CD14-positive monocyte (primary cell): ENCODE measurements at regions of chr22 and their contacts with region 1.

Region 1: DNA sequence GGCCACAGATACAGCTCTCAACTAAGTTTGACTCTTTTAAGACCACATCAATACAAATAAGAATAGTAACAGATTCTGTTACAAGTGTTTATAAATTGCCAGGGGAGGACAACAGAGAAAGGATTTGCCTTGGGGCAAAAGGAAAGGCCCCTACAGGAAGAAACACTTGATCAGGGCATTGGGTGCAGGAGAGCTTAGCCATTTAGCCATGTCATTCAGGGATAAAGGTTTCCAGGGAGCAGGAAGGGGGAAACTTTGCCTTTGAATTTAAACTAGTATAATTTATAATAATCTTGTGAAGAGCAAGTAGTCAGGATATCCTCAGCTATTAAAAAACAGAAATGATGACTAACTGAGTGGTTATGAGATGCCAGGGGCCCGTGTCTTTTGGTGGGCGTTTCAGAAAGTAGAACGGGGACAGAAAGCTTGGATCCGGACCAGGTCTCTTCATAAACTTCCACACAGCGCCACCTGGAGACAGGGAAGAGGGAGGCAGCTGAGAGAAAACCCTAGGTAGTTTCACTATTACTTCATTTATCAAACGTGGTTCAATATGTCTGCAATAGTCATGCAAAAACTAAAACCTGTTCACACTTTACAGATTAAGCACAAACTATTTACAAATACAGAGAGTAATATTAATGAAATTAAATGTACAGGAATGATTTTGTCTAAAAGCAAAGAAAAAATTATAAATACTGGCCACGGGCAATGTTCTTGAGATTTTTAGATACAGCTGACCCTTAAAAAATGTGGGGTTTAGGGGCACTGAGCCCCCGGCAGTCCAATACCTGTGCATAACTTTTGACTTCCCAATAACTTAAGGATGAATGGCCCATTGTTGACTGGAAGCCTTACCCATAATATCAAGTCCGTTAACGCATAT is 11.0 kb upstream of the SLC5A4 start:
- DNase-seq: peak; percentile 57 to 67 (median 63)
- H3K4me3 ChIP-seq: no peak overlapping the region
- H3K4me3 Mint-ChIP-seq: peak overlapping the region in 1 of 2 donors; percentile 30
- H3K27ac ChIP-seq: no peak overlapping the region
- H3K27ac Mint-ChIP-seq: no peak overlapping the region
- H3K4me1 ChIP-seq: peaks cover 0 to 4% of the 10 kb centered on the region in 2 donors
- H3K4me1 Mint-ChIP-seq: peaks cover 6% of the 10 kb centered on the region
- H3K27me3 ChIP-seq: no peaks in the 10 kb centered on the region
- H3K27me3 Mint-ChIP-seq: peaks cover 0 to 7% (median 5%) of the 10 kb centered on the region in 3 donors
- CTCF ChIP-seq: peak; percentile 94

Region 2: DNA sequence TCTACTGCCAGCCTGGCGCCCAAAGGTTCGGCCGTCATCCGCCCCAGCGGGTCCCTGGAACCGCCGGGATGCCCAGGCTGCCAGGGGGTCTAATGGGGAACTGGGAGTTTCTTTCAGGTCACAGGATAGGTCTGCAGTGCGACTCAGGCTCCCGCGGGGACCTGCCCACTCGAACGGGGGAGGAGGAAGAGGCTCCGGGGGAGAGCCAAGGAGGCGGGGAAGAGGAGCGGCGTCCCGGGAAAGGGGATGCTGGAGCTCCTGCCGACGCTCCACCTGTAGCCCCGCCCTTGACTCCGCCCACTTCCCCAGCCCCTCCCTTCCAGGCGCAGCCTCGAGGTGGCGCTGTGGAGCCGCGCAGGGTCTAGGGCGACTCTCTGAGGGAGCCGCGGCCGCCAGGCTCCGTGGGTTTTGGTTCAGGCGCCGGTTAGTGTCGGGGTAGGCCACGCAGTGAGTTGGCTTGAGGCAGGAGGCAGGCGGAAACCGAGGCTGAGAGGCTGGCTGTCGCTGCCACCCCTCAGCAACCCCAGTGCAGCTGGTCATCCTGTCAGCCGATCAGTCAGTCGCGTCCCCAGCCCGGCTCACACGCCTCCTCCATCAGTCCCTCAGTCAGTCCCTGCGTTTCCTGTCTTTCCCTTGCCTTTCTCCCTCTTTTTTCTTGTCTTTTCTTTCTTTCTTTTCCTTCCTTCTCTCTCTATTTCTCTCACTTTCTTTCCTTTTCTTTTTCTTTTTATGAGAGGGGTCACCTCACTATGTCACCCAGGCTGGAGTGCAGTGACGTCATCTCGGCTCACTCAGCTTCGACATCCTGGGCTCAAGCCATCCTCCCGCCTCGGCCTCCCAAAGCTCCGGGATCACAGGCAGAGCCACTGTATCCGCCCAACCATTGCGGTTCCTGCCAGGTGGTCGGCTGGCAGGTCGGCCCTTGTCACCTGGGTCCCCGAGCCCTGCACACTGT is 295.4 kb before region 1 on chr22:
- intact Hi-C with region 1: loop called (anchors 5 to 10 kb)
- DNase-seq: peak; percentile 72 to 78 (median 76)
- H3K4me3 ChIP-seq: peak overlapping the region; percentile 9 to 67 (median 33)
- H3K4me3 Mint-ChIP-seq: peak overlapping the region; percentile 76 to 83
- H3K27ac ChIP-seq: no peak overlapping the region
- H3K27ac Mint-ChIP-seq: peak overlapping the region in 4 of 7 donors; percentile 32 to 67 (median 50)
- H3K4me1 ChIP-seq: peaks cover 12 to 13% of the 10 kb centered on the region in 2 donors
- H3K4me1 Mint-ChIP-seq: peaks cover 12% of the 10 kb centered on the region
- H3K27me3 ChIP-seq: peaks cover 0 to 12% of the 10 kb centered on the region in 2 donors
- H3K27me3 Mint-ChIP-seq: peaks cover 12 to 26% (median 20%) of the 10 kb centered on the region in 3 donors
- CTCF ChIP-seq: peak; percentile 97

Region 3: GRCh38 chr22:31977141-31977841 is 288.8 kb before region 1 on chr22:
- intact Hi-C with region 1: loop called (anchors 5 to 10 kb)
- DNase-seq: peak; percentile 42 to 54 (median 44)
- H3K4me3 ChIP-seq: no peak overlapping the region
- H3K4me3 Mint-ChIP-seq: no peak overlapping the region
- H3K27ac ChIP-seq: no peak overlapping the region
- H3K27ac Mint-ChIP-seq: peak overlapping the region in 1 of 7 donors; percentile 56
- H3K4me1 ChIP-seq: no peaks in the 10 kb centered on the region
- H3K4me1 Mint-ChIP-seq: no peaks in the 10 kb centered on the region
- H3K27me3 ChIP-seq: no peaks in the 10 kb centered on the region
- H3K27me3 Mint-ChIP-seq: peaks cover 0 to 10% (median 3%) of the 10 kb centered on the region in 3 donors
- CTCF ChIP-seq: peak; percentile 75

Region 4: DNA sequence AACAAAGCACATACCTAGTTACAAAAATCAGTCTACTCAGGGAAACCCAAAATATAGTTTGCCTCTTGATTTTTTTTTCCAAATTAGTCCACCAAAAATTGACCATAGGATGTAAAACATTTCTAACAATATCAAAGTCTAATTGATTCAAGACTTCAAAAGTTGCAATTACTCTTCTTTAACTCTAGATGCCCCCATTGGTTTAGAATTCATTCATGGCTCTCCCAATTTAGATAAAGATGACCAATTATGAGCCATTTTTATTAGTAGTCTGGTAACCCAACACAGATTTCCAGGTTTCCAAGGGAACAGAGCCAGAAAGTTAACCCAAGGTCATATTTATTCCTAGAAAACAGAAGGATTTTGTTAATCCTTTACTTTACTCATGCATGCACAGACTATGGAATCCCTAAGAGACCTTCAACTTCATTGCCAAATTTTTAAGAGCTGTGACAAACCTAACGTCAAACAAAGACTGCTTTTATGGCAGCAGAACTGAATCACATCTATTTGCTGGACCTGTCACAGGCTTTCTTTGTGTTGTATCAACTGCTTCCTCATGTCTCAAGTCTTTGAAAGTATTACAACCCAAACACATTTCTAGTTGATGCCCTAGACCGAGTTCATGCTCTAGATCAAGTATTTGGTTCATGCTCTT is 162.3 kb before region 1 on chr22:
- intact Hi-C with region 1: loop called (anchors 2 to 5 kb)
- DNase-seq: peak in 2 of 3 donors; percentile 13 to 25
- H3K4me3 ChIP-seq: no peak overlapping the region
- H3K4me3 Mint-ChIP-seq: no peak overlapping the region
- H3K27ac ChIP-seq: no peak overlapping the region
- H3K27ac Mint-ChIP-seq: no peak overlapping the region
- H3K4me1 ChIP-seq: no peaks in the 10 kb centered on the region
- H3K4me1 Mint-ChIP-seq: no peaks in the 10 kb centered on the region
- H3K27me3 ChIP-seq: peaks cover 0 to 5% of the 10 kb centered on the region in 2 donors
- H3K27me3 Mint-ChIP-seq: peaks cover 4 to 6% (median 5%) of the 10 kb centered on the region in 3 donors
- CTCF ChIP-seq: peak; percentile 70

Region 5: GRCh38 chr22:32127904-32128303 is 138.2 kb before region 1 on chr22:
- intact Hi-C with region 1: no loop called
- DNase-seq: no peak
- H3K4me3 ChIP-seq: no peak overlapping the region
- H3K4me3 Mint-ChIP-seq: no peak overlapping the region
- H3K27ac ChIP-seq: no peak overlapping the region
- H3K27ac Mint-ChIP-seq: no peak overlapping the region
- H3K4me1 ChIP-seq: no peaks in the 10 kb centered on the region
- H3K4me1 Mint-ChIP-seq: peaks cover 4% of the 10 kb centered on the region
- H3K27me3 ChIP-seq: no peaks in the 10 kb centered on the region
- H3K27me3 Mint-ChIP-seq: peaks cover 0 to 8% (median 2%) of the 10 kb centered on the region in 3 donors
- CTCF ChIP-seq: no peak

Region 6: DNA sequence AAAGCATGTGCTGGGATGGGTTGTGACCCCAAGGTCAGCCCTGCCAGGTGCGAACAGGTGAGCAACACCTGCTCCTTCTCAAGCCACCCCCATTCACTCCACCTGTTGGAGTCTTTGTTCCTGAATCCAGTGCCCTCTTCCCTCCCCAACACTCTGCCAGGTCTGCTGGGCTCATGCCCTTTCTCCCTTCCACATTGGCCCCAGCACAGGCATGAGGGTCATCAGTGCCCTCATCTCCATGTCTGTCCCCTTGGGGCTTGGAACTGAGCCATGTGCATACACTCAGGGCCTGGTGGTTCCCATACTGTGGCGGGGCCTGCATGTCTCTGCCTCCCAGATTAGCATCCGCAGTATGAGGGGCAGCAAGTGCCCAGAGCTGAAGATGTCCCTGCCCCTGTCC is 80.3 kb before region 1 on chr22:
- intact Hi-C with region 1: no loop called
- DNase-seq: no peak
- H3K4me3 ChIP-seq: no peak overlapping the region
- H3K4me3 Mint-ChIP-seq: no peak overlapping the region
- H3K27ac ChIP-seq: no peak overlapping the region
- H3K27ac Mint-ChIP-seq: peak overlapping the region in 1 of 7 donors; percentile 38
- H3K4me1 ChIP-seq: no peaks in the 10 kb centered on the region
- H3K4me1 Mint-ChIP-seq: no peaks in the 10 kb centered on the region
- H3K27me3 ChIP-seq: no peaks in the 10 kb centered on the region
- H3K27me3 Mint-ChIP-seq: peaks cover 2 to 24% (median 11%) of the 10 kb centered on the region in 3 donors
- CTCF ChIP-seq: no peak

Region 7: GRCh38 chr22:32202539-32203180 is 63.5 kb before region 1 on chr22:
- intact Hi-C with region 1: loop called (anchors 5 kb)
- DNase-seq: peak; percentile 39 to 56 (median 54)
- H3K4me3 ChIP-seq: peak overlapping the region; percentile 31 to 73 (median 40)
- H3K4me3 Mint-ChIP-seq: peak overlapping the region; percentile 79 to 89
- H3K27ac ChIP-seq: no peak overlapping the region
- H3K27ac Mint-ChIP-seq: peak overlapping the region in 1 of 7 donors; percentile 55
- H3K4me1 ChIP-seq: peaks cover 21 to 44% of the 10 kb centered on the region in 2 donors
- H3K4me1 Mint-ChIP-seq: peaks cover 45% of the 10 kb centered on the region
- H3K27me3 ChIP-seq: peaks cover 0 to 22% of the 10 kb centered on the region in 2 donors
- H3K27me3 Mint-ChIP-seq: peaks cover 26 to 58% (median 48%) of the 10 kb centered on the region in 3 donors
- CTCF ChIP-seq: peak; percentile 72

Region 8: DNA sequence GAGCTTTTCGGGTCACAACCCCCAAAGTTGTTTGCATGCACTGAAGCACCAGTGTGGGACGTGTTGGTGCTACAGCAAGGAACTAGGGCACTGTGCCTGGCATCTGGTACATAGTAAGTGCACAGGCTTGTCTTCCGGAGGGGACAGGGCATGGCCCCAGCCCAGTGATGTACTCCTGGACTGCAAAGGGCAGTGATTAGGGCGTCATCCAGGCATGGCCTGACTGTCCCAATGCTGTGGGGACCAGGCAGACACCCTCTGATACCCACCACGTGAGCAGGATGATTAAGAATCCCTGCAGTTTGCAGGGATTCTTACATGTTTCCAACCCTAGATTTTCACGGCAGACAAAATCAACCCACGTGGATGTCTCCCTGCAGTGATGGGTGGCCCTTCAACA is 41.5 kb after region 1 on chr22:
- intact Hi-C with region 1: no loop called
- DNase-seq: no peak
- H3K4me3 ChIP-seq: no peak overlapping the region
- H3K4me3 Mint-ChIP-seq: no peak overlapping the region
- H3K27ac ChIP-seq: no peak overlapping the region
- H3K27ac Mint-ChIP-seq: no peak overlapping the region
- H3K4me1 ChIP-seq: no peaks in the 10 kb centered on the region
- H3K4me1 Mint-ChIP-seq: no peaks in the 10 kb centered on the region
- H3K27me3 ChIP-seq: no peaks in the 10 kb centered on the region
- H3K27me3 Mint-ChIP-seq: peaks cover 7 to 9% (median 8%) of the 10 kb centered on the region in 3 donors
- CTCF ChIP-seq: no peak